CD8-positive, alpha-beta T cell (primary cell): ENCODE measurements at regions of chr9 and their contacts with region 1.

Region 1: DNA sequence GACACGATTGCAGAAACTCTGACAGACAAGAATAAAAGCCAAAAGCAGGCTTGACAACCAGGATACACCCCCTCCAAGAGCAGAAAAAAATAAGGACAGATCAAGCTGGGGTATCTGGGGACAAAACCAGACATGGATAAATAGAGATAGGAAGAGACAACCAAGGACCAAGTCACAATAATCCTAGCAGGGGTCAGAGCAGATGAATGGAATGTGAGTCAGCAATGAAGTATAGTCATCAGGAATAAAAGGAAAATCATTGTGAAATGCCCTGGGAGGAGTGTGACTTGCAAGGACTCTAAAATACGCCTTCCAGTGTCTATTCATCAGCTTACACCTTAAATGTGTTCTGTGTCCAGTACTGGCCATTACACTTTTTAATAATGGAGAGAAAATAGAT is 206.8 kb downstream of the CAAP1 start:
- DNase-seq: no peak
- ATAC-seq: no peak
- H3K4me3 ChIP-seq: no peak overlapping the region
- H3K4me3 Mint-ChIP-seq: no peak overlapping the region
- H3K27ac ChIP-seq: no peak overlapping the region
- H3K27ac Mint-ChIP-seq: no peak overlapping the region
- H3K4me1 ChIP-seq: no peaks in the 10 kb centered on the region
- H3K4me1 Mint-ChIP-seq: no peaks in the 10 kb centered on the region
- H3K27me3 ChIP-seq: no peaks in the 10 kb centered on the region
- H3K27me3 Mint-ChIP-seq: peaks cover 9% of the 10 kb centered on the region
- CTCF ChIP-seq: no peak

Region 2: DNA sequence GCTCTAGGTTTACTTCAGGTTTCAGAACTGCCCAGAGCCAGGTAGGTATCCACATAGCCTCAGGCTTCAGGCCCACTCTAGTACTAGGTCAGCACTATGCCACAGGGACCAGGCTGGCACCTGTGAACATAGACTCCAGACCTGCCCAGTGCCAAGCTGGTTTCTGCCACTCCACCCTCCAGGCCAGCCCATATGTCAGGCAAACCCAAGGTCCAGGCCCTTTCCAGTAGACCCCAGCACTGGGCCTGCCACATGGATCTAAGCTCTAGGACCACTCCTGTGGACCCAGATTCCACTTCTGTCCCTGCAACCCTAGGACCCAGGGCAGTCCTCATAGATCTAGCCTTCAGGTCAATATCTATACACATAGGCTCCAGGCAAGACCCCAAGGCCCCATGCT is 497.3 kb before region 1 on chr9:
- CTCF ChIA-PET with region 1: no interaction called
- POLR2A ChIA-PET with region 1: no interaction called
- intact Hi-C with region 1: no loop called
- DNase-seq: no peak
- ATAC-seq: no peak
- H3K4me3 ChIP-seq: no peak overlapping the region
- H3K4me3 Mint-ChIP-seq: no peak overlapping the region
- H3K27ac ChIP-seq: no peak overlapping the region
- H3K27ac Mint-ChIP-seq: no peak overlapping the region
- H3K4me1 ChIP-seq: no peaks in the 10 kb centered on the region
- H3K4me1 Mint-ChIP-seq: no peaks in the 10 kb centered on the region
- H3K27me3 ChIP-seq: no peaks in the 10 kb centered on the region
- H3K27me3 Mint-ChIP-seq: no peaks in the 10 kb centered on the region
- CTCF ChIP-seq: no peak

Region 3: DNA sequence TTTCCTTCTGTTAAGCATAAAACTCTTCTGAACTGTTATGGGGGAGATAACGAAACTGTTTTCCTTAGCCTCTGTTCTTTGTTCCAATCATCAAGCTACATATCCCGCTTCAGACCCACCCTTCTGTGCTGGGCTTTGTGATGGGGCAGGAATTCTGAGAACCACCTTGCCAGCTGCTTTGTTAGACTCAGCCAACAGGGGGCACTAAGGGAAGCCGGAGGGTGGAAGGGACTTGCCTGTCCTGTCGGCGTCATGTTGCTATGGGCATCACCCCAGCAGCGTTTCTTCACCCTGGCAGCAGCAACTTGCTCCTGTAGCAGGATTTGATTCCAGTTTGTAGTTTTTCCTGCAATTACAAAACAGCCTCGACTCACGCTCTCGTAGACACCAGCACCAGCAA is 37.7 kb after region 1 on chr9:
- CTCF ChIA-PET with region 1: no interaction called
- POLR2A ChIA-PET with region 1: no interaction called
- intact Hi-C with region 1: loop called in 1 of 2 experiments (anchors 5 kb)
- DNase-seq: peak in 1 of 9 experiments; percentile 3
- ATAC-seq: no peak
- H3K4me3 ChIP-seq: no peak overlapping the region
- H3K4me3 Mint-ChIP-seq: no peak overlapping the region
- H3K27ac ChIP-seq: no peak overlapping the region
- H3K27ac Mint-ChIP-seq: no peak overlapping the region
- H3K4me1 ChIP-seq: no peaks in the 10 kb centered on the region
- H3K4me1 Mint-ChIP-seq: no peaks in the 10 kb centered on the region
- H3K27me3 ChIP-seq: no peaks in the 10 kb centered on the region
- H3K27me3 Mint-ChIP-seq: peaks cover 4% of the 10 kb centered on the region
- CTCF ChIP-seq: no peak

Region 4: DNA sequence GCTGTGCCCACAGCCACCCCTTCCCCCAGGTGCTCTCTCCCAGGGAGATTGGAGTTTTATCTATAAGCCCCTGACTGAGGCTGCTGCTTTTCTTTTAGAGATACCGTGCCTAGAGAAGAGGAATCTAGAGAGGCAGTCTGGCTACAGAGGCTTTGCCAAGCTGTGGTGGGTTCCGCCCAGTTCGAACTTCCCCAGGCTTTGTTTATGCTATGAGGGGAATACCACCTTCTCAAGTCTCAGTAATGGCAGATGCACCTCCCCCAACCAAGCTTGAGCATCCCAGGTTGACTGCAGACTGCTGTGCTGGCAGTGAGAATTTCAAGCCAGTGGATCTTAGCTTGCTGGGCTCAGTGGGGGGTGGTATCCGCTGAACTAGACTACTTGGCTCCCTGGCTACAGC is 49.3 kb after region 1 on chr9:
- CTCF ChIA-PET with region 1: no interaction called
- POLR2A ChIA-PET with region 1: no interaction called
- intact Hi-C with region 1: loop called in 1 of 2 experiments (anchors 5 kb)
- DNase-seq: no peak
- ATAC-seq: no peak
- H3K4me3 ChIP-seq: no peak overlapping the region
- H3K4me3 Mint-ChIP-seq: no peak overlapping the region
- H3K27ac ChIP-seq: no peak overlapping the region
- H3K27ac Mint-ChIP-seq: no peak overlapping the region
- H3K4me1 ChIP-seq: no peaks in the 10 kb centered on the region
- H3K4me1 Mint-ChIP-seq: no peaks in the 10 kb centered on the region
- H3K27me3 ChIP-seq: no peaks in the 10 kb centered on the region
- H3K27me3 Mint-ChIP-seq: peaks cover 17% of the 10 kb centered on the region
- CTCF ChIP-seq: no peak